BJ (cell line): ENCODE measurements at regions of chr13 and their contacts with region 1.

Region 1: DNA sequence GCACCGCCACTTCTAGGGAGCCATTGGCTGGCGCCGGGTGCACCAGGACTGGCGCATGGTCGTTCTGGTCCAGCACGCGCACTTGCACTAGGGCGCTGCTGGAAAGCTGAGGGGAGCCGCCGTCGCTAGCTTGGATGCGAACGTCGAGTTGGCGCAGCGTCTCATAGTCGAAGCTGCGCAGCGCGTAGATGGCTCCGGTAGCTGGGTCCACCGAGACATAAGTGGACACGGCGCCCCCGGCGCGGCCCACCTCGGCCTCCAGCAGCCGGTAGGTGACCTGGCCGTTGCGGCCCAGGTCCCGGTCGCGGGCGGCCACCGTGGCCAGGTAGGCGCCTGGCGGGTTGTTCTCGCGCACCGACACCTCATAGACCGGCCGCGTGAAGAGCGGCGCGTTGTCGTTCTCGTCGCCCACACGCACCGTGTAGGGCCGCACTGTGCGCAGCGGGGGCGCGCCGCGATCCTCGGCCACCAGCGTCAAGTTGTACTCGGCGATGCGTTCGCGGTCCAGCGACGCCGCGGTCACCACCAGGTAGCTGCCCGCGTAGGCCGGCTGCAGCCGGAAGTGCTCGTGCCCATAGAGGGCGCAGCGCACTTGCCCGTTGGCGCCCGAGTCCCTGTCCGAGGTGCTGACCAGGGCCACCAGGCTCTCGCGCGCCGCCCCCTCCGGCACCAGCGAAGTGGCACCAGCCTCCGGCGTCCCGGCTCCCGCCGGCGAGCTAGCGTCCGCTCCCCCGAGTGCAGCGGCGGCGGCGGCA is 1.7 kb downstream of the PCDH8 start:
- DNase-seq: no peak
- H3K4me3 ChIP-seq: no peak overlapping the region; the same call in 1 of the 2 replicates
- H3K27me3 ChIP-seq: peaks cover 37% of the 10 kb centered on the region
- CTCF ChIP-seq: peak; percentile 43

Region 2: DNA sequence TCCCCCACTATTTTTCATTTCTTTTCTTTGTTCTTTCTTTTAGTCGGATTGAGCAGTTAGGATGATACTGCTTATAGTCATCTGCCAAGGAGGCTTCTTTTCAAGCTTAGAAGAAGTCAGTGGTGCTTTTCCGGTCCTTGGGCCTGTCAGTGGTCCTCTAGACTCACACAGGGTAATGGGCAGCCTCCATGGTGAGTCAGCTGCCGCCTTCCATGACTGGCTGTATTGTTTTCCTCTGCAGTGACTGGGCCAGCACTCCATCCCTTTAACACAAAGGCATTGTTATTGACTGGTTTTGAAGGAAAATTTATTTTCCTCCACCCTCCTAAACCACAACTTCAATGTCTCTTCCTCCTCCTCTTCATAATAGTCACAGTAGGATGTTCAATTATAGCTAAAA is 60.0 kb before region 1 on chr13:
- CTCF ChIA-PET with region 1: no interaction called
- POLR2A ChIA-PET with region 1: no interaction called
- DNase-seq: no peak
- H3K4me3 ChIP-seq: no peak overlapping the region
- H3K27me3 ChIP-seq: no peaks in the 10 kb centered on the region
- CTCF ChIP-seq: no peak

Region 3: GRCh38 chr13:52896827-52897659 is 50.3 kb after region 1 on chr13:
- CTCF ChIA-PET with region 1: no interaction called
- POLR2A ChIA-PET with region 1: interaction called, 12 read pairs
- DNase-seq: no peak
- H3K4me3 ChIP-seq: no peak overlapping the region
- H3K27me3 ChIP-seq: no peaks in the 10 kb centered on the region
- CTCF ChIP-seq: peak; percentile 47